CD4-positive, alpha-beta T cell (primary cell): ENCODE measurements at regions of chr14 and their contacts with region 1.

Region 1: GRCh38 chr14:105045710-105046326 is 19.4 kb downstream of the GPR132 start:
- DNase-seq: peak; percentile 86 to 96 (median 93)
- ATAC-seq: peak; percentile 93
- H3K4me3 ChIP-seq: no peak overlapping the region
- H3K4me3 Mint-ChIP-seq: peak overlapping the region; percentile 67
- H3K27ac ChIP-seq: no peak overlapping the region
- H3K27ac Mint-ChIP-seq: peak overlapping the region; percentile 70
- H3K4me1 ChIP-seq: peaks cover 10% of the 10 kb centered on the region
- H3K4me1 Mint-ChIP-seq: peaks cover 11% of the 10 kb centered on the region
- H3K27me3 ChIP-seq: no peaks in the 10 kb centered on the region
- H3K27me3 Mint-ChIP-seq: peaks cover 5% of the 10 kb centered on the region
- CTCF ChIP-seq: peak; percentile 100

Region 2: GRCh38 chr14:104976198-104977007 is 69.4 kb before region 1 on chr14:
- CTCF ChIA-PET with region 1: interaction called, 33 read pairs
- POLR2A ChIA-PET with region 1: interaction called, 7 read pairs
- intact Hi-C with region 1: loop called (anchors 1 kb)
- DNase-seq: peak; percentile 76 to 92 (median 85)
- ATAC-seq: peak; percentile 79
- H3K4me3 ChIP-seq: no peak overlapping the region
- H3K4me3 Mint-ChIP-seq: peak overlapping the region; percentile 90
- H3K27ac ChIP-seq: no peak overlapping the region
- H3K27ac Mint-ChIP-seq: no peak overlapping the region
- H3K4me1 ChIP-seq: peaks cover 23% of the 10 kb centered on the region
- H3K4me1 Mint-ChIP-seq: peaks cover 5% of the 10 kb centered on the region
- H3K27me3 ChIP-seq: peaks cover 25 to 29% of the 10 kb centered on the region in 2 experiments
- H3K27me3 Mint-ChIP-seq: peaks cover 36% of the 10 kb centered on the region
- CTCF ChIP-seq: peak; percentile 89

Region 3: GRCh38 chr14:105013150-105013785 is 32.5 kb before region 1 on chr14:
- CTCF ChIA-PET with region 1: interaction called, 23 read pairs
- POLR2A ChIA-PET with region 1: no interaction called
- intact Hi-C with region 1: no loop called
- DNase-seq: no peak
- ATAC-seq: no peak
- H3K4me3 ChIP-seq: no peak overlapping the region
- H3K4me3 Mint-ChIP-seq: no peak overlapping the region
- H3K27ac ChIP-seq: no peak overlapping the region
- H3K27ac Mint-ChIP-seq: no peak overlapping the region
- H3K4me1 ChIP-seq: peaks cover 55% of the 10 kb centered on the region
- H3K4me1 Mint-ChIP-seq: peaks cover 47% of the 10 kb centered on the region
- H3K27me3 ChIP-seq: no peaks in the 10 kb centered on the region
- H3K27me3 Mint-ChIP-seq: no peaks in the 10 kb centered on the region
- CTCF ChIP-seq: no peak

Region 4: DNA sequence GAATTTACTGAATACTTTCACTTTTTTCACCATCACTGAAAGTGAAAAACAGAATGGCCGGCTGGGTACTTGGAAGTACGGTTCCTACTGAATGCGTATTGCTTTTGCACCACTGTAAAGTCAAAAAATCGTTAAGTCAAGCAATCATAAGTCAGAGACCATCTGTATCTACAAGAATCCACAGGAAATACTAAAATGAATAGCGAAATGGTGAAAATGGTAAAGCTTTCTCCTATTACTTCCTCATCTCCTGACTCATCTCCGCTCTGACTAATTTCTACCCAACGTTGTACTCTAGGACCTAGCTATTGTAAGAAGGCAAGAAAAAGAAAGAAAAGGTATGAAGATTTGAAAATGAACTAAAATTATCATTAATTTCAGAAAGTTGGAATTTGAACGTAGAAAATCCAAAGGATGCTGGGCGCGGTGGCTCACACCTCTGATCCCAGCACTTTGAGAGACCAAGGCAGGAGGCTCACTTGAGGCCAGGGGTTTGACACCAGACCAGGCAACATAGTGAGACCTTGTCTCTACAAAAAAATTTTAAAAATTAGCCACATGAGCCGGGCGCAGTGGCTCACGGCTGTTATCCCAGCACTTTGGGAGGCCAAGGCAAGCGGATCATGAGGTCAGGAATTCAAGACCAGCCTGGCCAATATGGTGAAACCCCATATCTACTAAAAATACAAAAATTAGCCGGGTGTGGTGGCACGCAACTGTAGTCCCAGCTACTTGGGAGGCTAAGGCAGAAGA is 19.6 kb before region 1 on chr14:
- CTCF ChIA-PET with region 1: interaction called, 20 read pairs
- POLR2A ChIA-PET with region 1: interaction called, 8 read pairs
- intact Hi-C with region 1: loop called (anchors 1 to 2 kb)
- DNase-seq: peak in 3 of 14 experiments; percentile 35 to 57 (median 46)
- ATAC-seq: no peak
- H3K4me3 ChIP-seq: no peak overlapping the region
- H3K4me3 Mint-ChIP-seq: no peak overlapping the region
- H3K27ac ChIP-seq: no peak overlapping the region
- H3K27ac Mint-ChIP-seq: peak overlapping the region; percentile 73
- H3K4me1 ChIP-seq: peaks cover 38% of the 10 kb centered on the region
- H3K4me1 Mint-ChIP-seq: peaks cover 28% of the 10 kb centered on the region
- H3K27me3 ChIP-seq: no peaks in the 10 kb centered on the region
- H3K27me3 Mint-ChIP-seq: no peaks in the 10 kb centered on the region
- CTCF ChIP-seq: no peak

Region 5: DNA sequence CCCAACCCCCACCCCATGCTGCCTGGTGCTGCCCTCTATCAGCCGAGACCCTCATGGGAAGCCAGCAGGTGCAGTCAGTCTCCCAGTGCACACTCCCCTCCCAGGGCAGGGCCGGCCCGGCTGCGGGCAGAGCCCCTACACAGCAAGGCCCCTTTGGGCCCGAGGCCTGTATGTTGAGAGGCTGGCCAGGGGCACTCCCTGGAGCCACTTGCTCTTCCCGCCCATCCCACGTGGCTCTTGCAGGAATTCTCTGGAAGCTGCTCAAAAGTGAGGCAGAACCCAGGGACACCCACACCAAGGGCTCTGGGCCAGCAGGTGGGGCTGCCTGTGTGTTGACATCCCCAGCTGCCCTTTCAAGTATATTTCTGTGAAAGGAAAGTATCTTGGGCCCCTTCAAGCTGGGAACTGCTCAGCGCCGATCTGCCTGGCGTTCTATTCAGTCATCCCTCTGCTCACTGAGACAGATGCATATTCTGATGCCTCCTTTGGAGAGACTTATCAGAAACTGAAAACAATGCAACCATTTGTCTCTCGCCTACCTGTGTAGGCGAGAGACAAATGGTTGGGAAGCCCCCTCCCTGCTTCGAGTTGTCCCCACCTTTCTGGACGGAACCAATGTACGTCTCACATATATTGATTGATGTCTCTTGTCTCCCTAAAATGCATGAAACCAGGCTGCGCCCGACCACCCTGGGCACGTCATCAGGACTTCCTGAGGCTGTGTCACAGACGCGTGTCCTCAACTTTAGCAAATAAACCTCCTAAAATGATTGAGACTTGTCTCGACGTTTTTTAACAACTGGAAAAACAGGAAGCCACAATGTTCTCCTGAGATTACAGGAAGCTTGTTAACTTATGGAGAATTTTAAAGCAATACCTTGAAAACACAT is 13.5 kb after region 1 on chr14:
- CTCF ChIA-PET with region 1: interaction called, 44 read pairs
- POLR2A ChIA-PET with region 1: interaction called, 19 read pairs
- intact Hi-C with region 1: loop called in 1 of 2 experiments (anchors 2 kb)
- DNase-seq: peak in 11 of 14 experiments; percentile 27 to 86 (median 74)
- ATAC-seq: peak; percentile 77
- H3K4me3 ChIP-seq: peak overlapping the region; percentile 82
- H3K4me3 Mint-ChIP-seq: peak overlapping the region; percentile 89
- H3K27ac ChIP-seq: peak overlapping the region; percentile 86 to 95
- H3K27ac Mint-ChIP-seq: peak overlapping the region; percentile 91
- H3K4me1 ChIP-seq: peaks cover 63% of the 10 kb centered on the region
- H3K4me1 Mint-ChIP-seq: peaks cover 53% of the 10 kb centered on the region
- H3K27me3 ChIP-seq: no peaks in the 10 kb centered on the region
- H3K27me3 Mint-ChIP-seq: no peaks in the 10 kb centered on the region
- CTCF ChIP-seq: peak; percentile 35

Region 6: DNA sequence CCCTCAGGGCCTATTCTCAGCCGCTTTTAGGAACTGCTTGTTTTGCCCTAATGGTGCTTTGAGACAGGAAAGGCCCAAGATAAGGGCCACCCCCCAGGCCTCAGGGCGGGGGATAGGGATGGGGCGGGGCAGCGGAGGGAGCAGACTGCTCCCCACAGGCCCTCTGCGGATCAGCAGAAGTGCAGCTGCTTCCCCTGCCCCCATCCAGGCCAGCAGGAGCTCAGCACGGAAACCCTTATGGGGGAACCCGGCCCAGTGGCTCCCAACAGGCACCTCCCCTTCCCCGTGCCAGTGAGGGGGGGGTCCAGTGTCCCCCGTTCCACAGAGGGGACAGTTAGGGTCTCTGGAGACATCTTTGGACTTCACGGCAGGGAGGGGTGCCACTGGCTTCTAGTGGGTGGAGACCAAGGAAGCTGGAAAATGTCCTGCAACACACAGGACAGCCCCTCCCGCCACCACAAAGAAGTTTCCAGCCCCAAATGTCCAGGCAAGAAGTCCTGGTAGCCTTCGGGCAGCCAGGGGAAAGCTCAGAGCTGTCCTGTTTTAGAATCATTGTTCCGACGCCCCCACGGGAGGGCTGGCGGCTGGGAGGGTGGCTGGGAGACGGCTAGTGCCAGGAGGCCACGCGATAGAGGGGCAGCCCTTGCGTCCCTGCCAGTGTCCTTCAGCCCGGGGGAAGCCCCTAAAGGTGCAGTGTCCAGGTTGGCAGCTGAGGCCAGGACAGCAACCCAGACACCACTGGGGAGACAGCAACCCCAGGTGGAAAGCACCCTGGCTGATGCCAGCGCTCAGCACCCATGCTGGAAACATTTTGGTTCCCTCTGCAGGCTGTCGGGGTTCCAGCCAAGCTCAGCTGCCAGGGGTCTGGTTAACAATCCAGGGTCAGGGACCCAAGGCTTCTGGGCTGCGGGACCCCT is 29.8 kb after region 1 on chr14:
- CTCF ChIA-PET with region 1: interaction called, 11 read pairs
- POLR2A ChIA-PET with region 1: interaction called, 3 read pairs
- intact Hi-C with region 1: no loop called
- DNase-seq: peak in 5 of 14 experiments; percentile 42 to 59 (median 46)
- ATAC-seq: peak; percentile 64
- H3K4me3 ChIP-seq: no peak overlapping the region
- H3K4me3 Mint-ChIP-seq: no peak overlapping the region
- H3K27ac ChIP-seq: no peak overlapping the region
- H3K27ac Mint-ChIP-seq: no peak overlapping the region
- H3K4me1 ChIP-seq: peaks cover 42% of the 10 kb centered on the region
- H3K4me1 Mint-ChIP-seq: peaks cover 34% of the 10 kb centered on the region
- H3K27me3 ChIP-seq: no peaks in the 10 kb centered on the region
- H3K27me3 Mint-ChIP-seq: no peaks in the 10 kb centered on the region
- CTCF ChIP-seq: no peak

Region 7: GRCh38 chr14:105351920-105352851 is 306.4 kb after region 1 on chr14:
- CTCF ChIA-PET with region 1: no interaction called
- POLR2A ChIA-PET with region 1: no interaction called
- intact Hi-C with region 1: loop called in 1 of 2 experiments (anchors 5 kb)
- DNase-seq: peak; percentile 80 to 93 (median 87)
- ATAC-seq: peak; percentile 100
- H3K4me3 ChIP-seq: no peak overlapping the region
- H3K4me3 Mint-ChIP-seq: no peak overlapping the region
- H3K27ac ChIP-seq: no peak overlapping the region
- H3K27ac Mint-ChIP-seq: no peak overlapping the region
- H3K4me1 ChIP-seq: peaks cover 5% of the 10 kb centered on the region
- H3K4me1 Mint-ChIP-seq: peaks cover 4% of the 10 kb centered on the region
- H3K27me3 ChIP-seq: no peaks in the 10 kb centered on the region
- H3K27me3 Mint-ChIP-seq: no peaks in the 10 kb centered on the region
- CTCF ChIP-seq: peak; percentile 74

Region 8: DNA sequence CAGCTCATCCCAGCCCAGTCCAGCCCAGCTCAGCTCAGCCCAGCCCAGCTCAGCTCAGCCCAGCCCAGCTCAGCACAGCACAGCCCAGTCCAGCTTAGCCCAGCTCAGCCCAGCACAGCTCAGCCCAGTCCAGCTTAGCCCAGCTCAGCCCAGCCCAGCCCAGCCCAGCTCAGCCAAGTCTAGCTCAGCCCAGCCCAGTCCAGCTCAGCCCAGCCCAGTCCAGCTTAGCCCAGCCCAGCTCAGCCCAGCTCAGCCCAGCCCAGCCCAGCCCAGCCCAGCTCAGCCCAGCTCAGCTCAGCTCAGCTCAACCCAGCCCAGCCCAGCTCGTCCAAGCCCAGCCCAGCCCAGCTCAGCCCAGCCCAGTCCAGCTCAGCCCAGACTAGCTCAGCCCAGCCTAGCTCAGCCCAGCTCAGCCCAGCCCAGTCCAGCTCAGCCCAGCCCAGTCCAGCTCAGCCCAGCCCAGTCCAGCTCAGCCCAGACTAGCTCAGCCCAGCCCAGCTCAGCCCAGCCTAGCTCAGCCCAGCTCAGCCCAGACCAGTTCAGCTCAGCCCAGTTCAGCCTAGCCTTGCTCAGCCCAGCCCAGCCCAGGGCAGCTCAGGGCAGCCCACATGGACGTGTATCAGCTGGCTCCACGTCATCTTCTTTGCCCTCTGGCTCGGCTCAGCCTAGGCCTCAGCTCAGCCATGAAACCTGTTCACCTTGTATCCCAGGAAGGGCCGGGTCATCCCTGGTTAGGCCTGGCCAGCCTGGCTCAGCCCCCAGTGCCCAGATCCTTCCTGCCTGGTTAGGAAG is 666.1 kb after region 1 on chr14:
- CTCF ChIA-PET with region 1: no interaction called
- POLR2A ChIA-PET with region 1: no interaction called
- intact Hi-C with region 1: no loop called
- DNase-seq: no peak
- ATAC-seq: no peak
- H3K4me3 ChIP-seq: no peak overlapping the region
- H3K4me3 Mint-ChIP-seq: no peak overlapping the region
- H3K27ac ChIP-seq: no peak overlapping the region
- H3K27ac Mint-ChIP-seq: no peak overlapping the region
- H3K4me1 ChIP-seq: no peaks in the 10 kb centered on the region
- H3K4me1 Mint-ChIP-seq: no peaks in the 10 kb centered on the region
- H3K27me3 ChIP-seq: no peaks in the 10 kb centered on the region
- H3K27me3 Mint-ChIP-seq: no peaks in the 10 kb centered on the region
- CTCF ChIP-seq: no peak